ENCODE measurements at regions of chr10 and their contacts with region 1.

Region 1: DNA sequence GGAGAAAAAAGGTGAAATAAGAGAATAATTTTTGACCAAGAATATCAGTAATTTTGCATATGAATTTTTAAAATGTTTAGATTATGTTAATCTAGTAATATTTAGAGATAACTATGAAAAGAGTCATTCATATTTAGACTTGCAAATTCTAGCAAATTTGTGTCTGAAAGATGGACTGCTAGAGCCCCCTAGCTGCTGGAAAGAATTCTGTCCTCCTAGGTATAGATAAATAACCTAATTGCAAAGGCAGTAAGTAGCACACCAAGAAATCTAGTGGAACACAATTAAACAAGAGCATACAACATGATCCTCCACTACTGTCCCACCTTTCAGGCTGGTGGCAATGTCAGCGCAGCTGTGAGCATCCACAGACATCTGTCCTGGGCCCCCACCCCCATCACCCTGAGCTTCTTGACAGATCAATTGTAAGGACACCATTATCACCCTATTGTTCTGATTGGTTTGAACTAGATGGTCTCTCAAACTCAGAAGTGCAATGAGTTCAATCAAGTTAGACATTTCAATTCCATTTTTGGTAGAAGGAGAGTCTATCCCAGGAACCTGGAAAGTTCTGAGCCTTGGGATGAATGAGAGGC is 15.0 kb upstream of the GFRA1 start:
- DNase-seq: no peak
- ATAC-seq: peak; percentile 52

Region 2: GRCh38 chr10:115706026-115706781 is 581.8 kb before region 1 on chr10:
- intact Hi-C with region 1: loop called (anchors 10 kb)
- DNase-seq: no peak
- ATAC-seq: no peak

Region 3: GRCh38 chr10:115829521-115830205 is 458.3 kb before region 1 on chr10:
- intact Hi-C with region 1: loop called (anchors 10 kb)
- DNase-seq: no peak
- ATAC-seq: peak; percentile 65

Region 4: GRCh38 chr10:116201011-116201410 is 87.0 kb before region 1 on chr10:
- intact Hi-C with region 1: no loop called
- DNase-seq: no peak
- ATAC-seq: no peak

Region 5: DNA sequence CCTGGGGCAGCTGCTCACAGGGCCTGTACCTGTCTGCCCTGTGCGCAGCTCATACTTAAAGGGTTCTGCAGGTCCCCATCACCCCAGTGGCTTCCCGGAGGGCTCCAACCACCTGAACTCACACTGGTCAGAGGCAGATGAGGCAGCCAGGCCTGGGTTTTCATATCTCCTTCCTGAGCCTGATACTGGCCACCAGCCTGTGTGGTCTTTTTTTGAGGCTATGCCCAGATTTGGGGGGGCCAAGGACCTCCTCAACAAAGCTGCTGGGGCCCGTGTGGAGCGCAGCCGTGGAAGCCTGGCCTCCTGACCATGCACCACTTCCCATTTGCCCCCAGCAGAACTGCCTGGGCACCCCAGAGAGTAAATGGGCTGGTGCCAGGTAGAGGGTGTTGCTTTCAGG is 358.5 kb after region 1 on chr10:
- intact Hi-C with region 1: no loop called
- DNase-seq: no peak
- ATAC-seq: no peak